Activated CD4-positive, alpha-beta T cell treated with anti-CD3 and anti-CD28 coated beads for 36 hours (primary cell): ENCODE measurements at regions of chr1 and their contacts with region 1.

Region 1: DNA sequence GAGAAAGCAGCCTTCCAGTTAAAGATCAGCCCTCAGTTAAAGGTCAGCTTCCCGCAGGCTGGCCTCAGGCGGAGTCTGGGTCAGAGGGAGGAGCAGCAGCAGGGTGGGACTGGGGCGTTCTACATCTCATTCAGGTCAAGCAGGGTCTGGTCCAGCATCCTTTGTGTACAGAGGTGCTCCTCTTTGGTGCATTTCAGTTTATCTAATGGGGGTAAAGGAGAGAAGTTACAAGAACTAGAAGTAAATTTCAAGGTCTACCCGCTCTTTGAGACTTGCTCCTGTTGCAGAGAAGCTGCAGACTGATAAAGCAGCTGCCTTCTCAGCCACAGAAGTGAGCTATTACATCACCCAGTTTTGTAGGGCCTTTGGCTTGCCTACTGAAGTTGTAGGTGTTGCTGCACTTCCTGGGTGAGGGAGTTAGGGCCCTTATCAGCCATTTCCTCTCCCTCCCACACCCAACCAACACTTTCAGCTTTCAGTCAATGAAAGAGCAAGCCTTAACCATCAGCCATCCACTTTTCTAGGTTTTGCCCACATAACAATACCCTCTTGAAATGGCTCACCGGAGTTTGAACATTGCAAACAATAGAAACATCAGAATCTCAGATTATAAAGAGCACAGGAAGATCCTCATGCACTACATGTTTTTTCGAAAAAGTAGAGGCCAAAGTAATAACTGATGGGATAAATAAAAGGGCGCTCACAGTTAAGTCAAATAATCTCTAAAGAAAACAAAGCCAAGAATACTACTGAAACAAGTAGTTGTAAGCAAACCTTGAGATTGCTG is 2.8 kb upstream of the NUP210L start:
- DNase-seq: peak; percentile 83
- ATAC-seq: peak; percentile 98
- H3K4me3 Mint-ChIP-seq: peak overlapping the region; percentile 60
- H3K27ac Mint-ChIP-seq: peak overlapping the region; percentile 96
- H3K4me1 Mint-ChIP-seq: peaks cover 71% of the 10 kb centered on the region
- H3K27me3 Mint-ChIP-seq: no peaks in the 10 kb centered on the region

Region 2: DNA sequence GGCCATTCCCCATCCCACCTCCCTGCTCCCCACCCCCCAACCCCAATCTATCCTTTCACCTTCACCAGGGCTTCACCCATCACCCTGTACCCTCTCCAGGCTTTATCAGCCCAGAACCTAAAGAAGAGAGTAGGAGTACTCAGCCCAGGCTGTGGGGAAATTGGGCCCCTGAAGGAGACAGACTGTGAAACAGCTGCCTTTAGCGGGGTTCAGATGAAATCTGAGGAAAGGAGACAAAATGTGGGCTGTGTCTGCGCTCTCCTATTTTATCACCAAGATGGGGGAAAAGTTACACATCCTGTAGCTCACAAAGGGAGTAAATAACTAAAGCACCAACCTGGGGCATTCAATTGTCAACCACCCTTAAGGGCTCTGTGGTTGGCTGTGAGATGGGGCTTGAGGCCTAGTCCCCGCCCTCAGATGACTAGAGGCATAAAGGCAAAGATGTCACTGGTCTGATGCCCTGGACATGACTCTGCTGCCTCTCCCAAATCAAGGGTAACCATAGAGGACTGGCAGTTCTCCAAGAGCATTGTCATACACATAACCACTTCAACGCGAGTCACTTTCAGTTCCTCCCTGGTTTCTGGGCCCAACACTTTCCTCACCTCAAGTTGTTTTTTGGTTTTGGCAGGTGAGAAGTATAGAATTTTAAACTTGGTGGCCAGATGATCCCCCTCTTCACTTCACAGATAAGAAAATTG is 352.5 kb before region 1 on chr1:
- CTCF ChIA-PET with region 1: no interaction called
- POLR2A ChIA-PET with region 1: interaction called, 3 read pairs
- intact Hi-C with region 1: loop called in 1 of 2 experiments (anchors 1 kb)
- DNase-seq: peak; percentile 87
- ATAC-seq: peak; percentile 98
- H3K4me3 Mint-ChIP-seq: peak overlapping the region; percentile 28
- H3K27ac Mint-ChIP-seq: peak overlapping the region; percentile 85
- H3K4me1 Mint-ChIP-seq: peaks cover 30% of the 10 kb centered on the region
- H3K27me3 Mint-ChIP-seq: no peaks in the 10 kb centered on the region

Region 3: GRCh38 chr1:154176337-154176736 is 18.6 kb after region 1 on chr1:
- CTCF ChIA-PET with region 1: interaction called, 16 read pairs
- POLR2A ChIA-PET with region 1: interaction called, 7 read pairs
- intact Hi-C with region 1: loop called in 1 of 2 experiments (anchors 1 kb)
- DNase-seq: no peak
- ATAC-seq: peak; percentile 37
- H3K4me3 Mint-ChIP-seq: no peak overlapping the region
- H3K27ac Mint-ChIP-seq: peak overlapping the region; percentile 78
- H3K4me1 Mint-ChIP-seq: peaks cover 74% of the 10 kb centered on the region
- H3K27me3 Mint-ChIP-seq: no peaks in the 10 kb centered on the region